Activated T-helper 1 cell treated with anti-CD3 and anti-CD28 coated beads, Interleukin-12 subunit alpha, Interleukin-12 subunit beta, Interleukin-2, Interleukin-4 antibody, amounts not matched to agents 30 ng/mL and 10 ng/mL and 1 ng/mL, durations not matched to agents 14 hours and 24 hours and 36 hours (primary cell): ENCODE measurements at regions of chr7 and their contacts with region 1.

Region 1: GRCh38 chr7:29866490-29866930 is 60.2 kb downstream of the WIPF3 start:
- DNase-seq: no peak
- H3K4me3 Mint-ChIP-seq: no peak overlapping the region
- H3K27ac Mint-ChIP-seq: no peak overlapping the region
- H3K4me1 Mint-ChIP-seq: no peaks in the 10 kb centered on the region
- H3K27me3 Mint-ChIP-seq: peaks cover 7% of the 10 kb centered on the region

Region 2: GRCh38 chr7:29825775-29826529 is 40.6 kb before region 1 on chr7:
- intact Hi-C with region 1: loop called (anchors 1 kb)
- DNase-seq: no peak
- H3K4me3 Mint-ChIP-seq: peak overlapping the region; percentile 26
- H3K27ac Mint-ChIP-seq: no peak overlapping the region
- H3K4me1 Mint-ChIP-seq: peaks cover 10% of the 10 kb centered on the region
- H3K27me3 Mint-ChIP-seq: peaks cover 12% of the 10 kb centered on the region

Region 3: GRCh38 chr7:29988424-29989256 is 122.1 kb after region 1 on chr7:
- intact Hi-C with region 1: no loop called
- DNase-seq: no peak
- H3K4me3 Mint-ChIP-seq: peak overlapping the region; percentile 69
- H3K27ac Mint-ChIP-seq: no peak overlapping the region
- H3K4me1 Mint-ChIP-seq: no peaks in the 10 kb centered on the region
- H3K27me3 Mint-ChIP-seq: peaks cover 63% of the 10 kb centered on the region